HEK293T (cell line): ENCODE measurements at regions of chr18 and their contacts with region 1.

Region 1: GRCh38 chr18:31424383-31424988 is 23.1 kb upstream of the DSG3 start:
- DNase-seq: peak; percentile 81

Region 2: GRCh38 chr18:31401156-31402025 is 23.1 kb before region 1 on chr18:
- CTCF ChIA-PET with region 1: interaction called, 11 read pairs
- POLR2A ChIA-PET with region 1: no interaction called
- DNase-seq: no peak

Region 3: DNA sequence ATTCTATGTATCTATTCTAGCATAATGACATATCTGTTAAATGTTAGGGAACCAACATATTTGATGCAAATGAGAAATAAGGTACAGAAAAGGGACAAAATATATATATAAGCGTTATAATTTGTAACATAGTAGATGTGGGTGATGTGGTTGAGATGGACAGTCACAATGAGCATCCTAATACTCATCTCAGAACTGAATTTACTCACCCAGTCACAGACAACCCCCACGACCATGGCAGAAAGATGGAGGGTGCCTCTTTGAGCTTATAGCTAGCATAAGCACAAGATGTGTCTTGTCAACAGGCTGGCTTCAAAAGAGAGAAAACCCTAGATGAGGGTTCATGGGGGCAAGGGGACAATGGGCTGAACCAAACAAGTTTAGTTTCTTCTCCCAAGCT is 13.9 kb after region 1 on chr18:
- CTCF ChIA-PET with region 1: interaction called, 13 read pairs
- POLR2A ChIA-PET with region 1: no interaction called
- DNase-seq: no peak

Region 4: GRCh38 chr18:31546476-31546875 is 122.0 kb after region 1 on chr18:
- CTCF ChIA-PET with region 1: interaction called, 12 read pairs
- POLR2A ChIA-PET with region 1: no interaction called
- DNase-seq: no peak